OCI-LY7 (cell line): ENCODE measurements at regions of chr10 and their contacts with region 1.

Region 1: DNA sequence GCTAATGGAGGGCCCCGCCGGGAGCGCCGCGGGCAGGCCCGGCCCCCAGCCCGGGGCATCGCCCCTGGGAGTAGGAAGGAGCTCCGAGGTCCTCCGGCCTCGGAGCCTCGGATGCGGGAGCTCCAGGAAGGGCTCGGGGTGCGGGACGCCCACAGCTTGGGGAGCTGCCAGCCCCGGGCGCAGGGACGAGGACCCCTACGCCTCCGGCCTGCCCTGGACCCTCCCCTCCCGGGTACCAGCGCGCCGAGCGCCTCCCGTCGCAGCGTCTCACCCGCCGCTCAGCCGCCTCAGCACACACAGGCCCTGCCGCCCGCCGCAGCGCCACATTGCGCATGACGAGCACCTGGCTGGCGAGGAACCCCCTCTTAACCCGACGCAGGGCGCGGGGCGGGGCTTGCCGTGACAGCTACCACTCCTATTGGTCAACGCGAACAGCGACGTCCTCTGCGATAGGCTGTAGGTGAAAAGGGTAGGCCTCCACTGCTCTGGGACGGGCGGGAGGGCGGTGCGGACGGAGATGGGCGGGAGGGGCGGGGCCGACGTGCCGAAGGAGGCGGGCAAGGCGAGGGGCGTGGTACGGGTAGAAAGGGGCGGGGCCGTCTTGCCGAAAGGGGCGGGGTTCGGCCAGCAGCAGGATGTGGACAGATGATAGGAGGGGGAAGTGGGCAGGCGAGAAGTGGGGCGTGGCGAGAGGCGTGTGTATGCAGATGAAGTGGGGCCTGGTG is at the start of gene PITRM1:
- DNase-seq: peak; percentile 98
- H3K4me3 ChIP-seq: peak within 1 kb of the TSS; percentile 81
- H3K27ac ChIP-seq: peak within 1 kb of the TSS; percentile 27
- H3K4me1 ChIP-seq: peaks cover 7% of the 10 kb centered on the region
- CTCF ChIP-seq: no peak
- total RNA-seq, gene PITRM1: 34.6 and 44.3 TPM in 2 replicates

Region 2: DNA sequence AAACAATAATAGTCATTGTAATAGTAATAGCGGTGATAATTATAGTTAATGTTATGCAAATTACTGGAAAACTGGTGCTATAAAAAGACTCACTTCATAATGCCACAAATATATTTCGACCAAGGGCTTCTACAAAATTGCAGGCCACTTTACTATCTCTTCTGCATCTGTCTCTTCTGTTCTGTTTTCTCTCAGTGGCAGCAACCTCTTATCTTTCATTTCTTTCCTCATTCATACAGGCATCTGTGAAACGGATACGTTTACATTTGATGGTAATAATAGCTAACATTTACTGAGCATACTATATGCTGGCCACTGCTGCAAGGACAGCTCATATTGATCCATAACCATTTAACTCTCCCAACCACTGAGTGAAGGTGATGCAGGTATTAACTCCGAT is 642.7 kb before region 1 on chr10:
- CTCF ChIA-PET with region 1: no interaction called
- POLR2A ChIA-PET with region 1: no interaction called
- intact Hi-C with region 1: no loop called
- DNase-seq: no peak
- H3K4me3 ChIP-seq: no peak overlapping the region
- H3K27ac ChIP-seq: no peak overlapping the region
- H3K4me1 ChIP-seq: no peaks in the 10 kb centered on the region
- CTCF ChIP-seq: no peak

Region 3: DNA sequence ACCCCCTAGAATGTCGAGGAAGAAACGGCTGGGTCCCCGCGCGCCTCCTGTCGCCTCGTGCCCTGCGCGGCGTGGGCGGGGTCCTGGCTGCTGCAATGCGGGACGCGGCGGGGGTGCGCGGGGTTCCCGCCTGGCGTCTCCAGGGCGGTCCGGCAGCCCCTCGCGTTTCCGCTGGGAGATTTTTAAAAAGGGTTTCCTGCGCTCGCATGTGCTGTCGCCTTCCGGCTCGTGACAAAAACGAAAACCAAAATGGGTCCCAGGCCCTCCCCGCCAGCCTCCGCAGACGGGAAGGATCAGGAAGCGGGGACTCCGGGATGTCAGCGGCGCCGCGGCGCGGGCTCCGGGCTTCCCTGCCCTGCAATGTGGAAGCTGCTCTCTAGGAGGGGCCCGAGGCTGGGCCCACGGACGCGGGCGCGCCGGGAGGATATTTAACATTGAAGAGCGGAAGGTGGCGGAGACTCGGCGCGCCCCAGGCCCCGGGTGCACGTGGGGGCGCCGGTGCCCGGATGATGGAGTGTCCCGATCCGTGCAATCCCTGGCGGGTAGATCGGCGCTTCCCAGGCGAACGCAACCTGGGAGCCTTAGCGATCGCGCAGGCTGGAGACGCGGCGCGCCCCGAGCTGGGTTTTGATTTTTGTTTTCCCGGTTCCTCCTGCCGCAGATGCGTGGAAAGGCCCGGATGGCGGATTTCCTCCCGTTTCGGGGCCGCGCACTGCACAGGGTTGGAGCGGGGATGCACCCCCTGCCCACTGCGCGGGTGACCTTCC is 104.2 kb before region 1 on chr10:
- CTCF ChIA-PET with region 1: no interaction called
- POLR2A ChIA-PET with region 1: no interaction called
- intact Hi-C with region 1: loop called (anchors 2 kb)
- DNase-seq: peak; percentile 76
- H3K4me3 ChIP-seq: peak overlapping the region; percentile 97
- H3K27ac ChIP-seq: peak overlapping the region; percentile 75
- H3K4me1 ChIP-seq: peaks cover 20% of the 10 kb centered on the region
- CTCF ChIP-seq: no peak

Region 4: GRCh38 chr10:3081383-3081981 is 91.1 kb before region 1 on chr10:
- CTCF ChIA-PET with region 1: no interaction called
- POLR2A ChIA-PET with region 1: no interaction called
- intact Hi-C with region 1: no loop called
- DNase-seq: no peak
- H3K4me3 ChIP-seq: no peak overlapping the region
- H3K27ac ChIP-seq: no peak overlapping the region
- H3K4me1 ChIP-seq: no peaks in the 10 kb centered on the region
- CTCF ChIP-seq: no peak

Region 5: DNA sequence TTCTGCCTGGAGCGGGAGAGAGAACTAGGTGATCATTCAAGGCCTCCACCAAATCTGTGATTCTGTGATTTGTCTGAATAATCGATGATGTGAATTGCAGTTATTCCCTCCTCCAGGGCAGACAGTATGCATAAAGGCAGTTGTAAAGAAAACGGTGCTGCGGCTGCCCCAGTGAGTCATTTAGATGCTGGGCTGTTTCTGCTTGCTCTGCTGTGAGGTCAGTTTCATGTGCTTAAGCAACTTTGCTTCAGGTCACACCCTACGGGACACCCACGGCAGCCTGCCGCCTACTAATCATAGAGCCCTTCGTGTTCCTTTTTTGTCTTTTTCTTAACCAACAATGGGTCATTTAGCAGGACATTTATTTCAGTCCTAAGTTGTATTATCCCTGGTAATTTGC is 158.1 kb after region 1 on chr10:
- CTCF ChIA-PET with region 1: no interaction called
- POLR2A ChIA-PET with region 1: no interaction called
- intact Hi-C with region 1: no loop called
- DNase-seq: no peak
- H3K4me3 ChIP-seq: no peak overlapping the region
- H3K27ac ChIP-seq: no peak overlapping the region
- H3K4me1 ChIP-seq: no peaks in the 10 kb centered on the region
- CTCF ChIP-seq: no peak